ENCODE measurements at regions of chr12 and their contacts with region 1.

Region 1: GRCh38 chr12:121980191-121980891 is 41.3 kb upstream of the BCL7A start:
- DNase-seq: peak; percentile 54
- CTCF ChIP-seq: no peak

Region 2: GRCh38 chr12:121992059-121992879 is 11.9 kb after region 1 on chr12:
- CTCF ChIA-PET with region 1: interaction called, 24 read pairs
- POLR2A ChIA-PET with region 1: interaction called, 12 read pairs
- DNase-seq: peak; percentile 84
- CTCF ChIP-seq: no peak

Region 3: GRCh38 chr12:122060081-122060501 is 79.8 kb after region 1 on chr12:
- CTCF ChIA-PET with region 1: no interaction called
- POLR2A ChIA-PET with region 1: no interaction called
- DNase-seq: no peak
- CTCF ChIP-seq: no peak